ENCODE measurements at regions of chr10 and their contacts with region 1.

Region 1: DNA sequence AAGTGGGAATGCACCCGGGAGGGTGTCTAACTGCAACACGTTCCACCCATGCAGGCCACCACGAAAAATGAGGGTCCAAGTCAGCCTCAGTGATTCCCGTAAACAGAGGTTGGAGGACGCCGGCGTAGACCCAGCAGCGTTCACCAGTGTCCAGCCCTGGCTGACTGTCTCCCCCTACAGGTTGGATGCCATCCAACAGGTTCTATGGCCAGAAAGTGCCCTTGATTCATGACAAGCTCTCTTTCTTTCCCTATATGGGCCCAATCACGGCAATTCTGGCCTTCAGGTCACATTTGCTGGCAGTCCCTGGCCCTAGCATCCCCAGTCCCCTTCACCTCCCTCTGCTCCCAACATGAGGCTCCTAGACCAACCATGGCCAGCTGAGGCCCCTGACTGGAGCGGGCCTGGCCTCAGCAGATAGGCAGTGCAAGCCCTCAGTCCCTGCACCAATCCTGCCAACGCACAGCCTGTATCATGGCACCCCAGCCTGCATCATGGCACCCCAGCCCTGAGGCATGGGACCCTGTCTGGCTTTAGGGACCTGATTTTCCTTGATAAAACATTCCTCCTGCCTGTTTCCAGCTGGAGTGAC is 227.4 kb downstream of the GRID1 start:
- DNase-seq: no peak
- ATAC-seq: no peak
- H3K4me3 ChIP-seq: no peak overlapping the region
- H3K27ac ChIP-seq: no peak overlapping the region
- H3K4me1 ChIP-seq: no peaks in the 10 kb centered on the region
- H3K27me3 ChIP-seq: peaks cover 0 to 4% (median 0%) of the 10 kb centered on the region in 3 donors
- CTCF ChIP-seq: peak; percentile 39

Region 2: DNA sequence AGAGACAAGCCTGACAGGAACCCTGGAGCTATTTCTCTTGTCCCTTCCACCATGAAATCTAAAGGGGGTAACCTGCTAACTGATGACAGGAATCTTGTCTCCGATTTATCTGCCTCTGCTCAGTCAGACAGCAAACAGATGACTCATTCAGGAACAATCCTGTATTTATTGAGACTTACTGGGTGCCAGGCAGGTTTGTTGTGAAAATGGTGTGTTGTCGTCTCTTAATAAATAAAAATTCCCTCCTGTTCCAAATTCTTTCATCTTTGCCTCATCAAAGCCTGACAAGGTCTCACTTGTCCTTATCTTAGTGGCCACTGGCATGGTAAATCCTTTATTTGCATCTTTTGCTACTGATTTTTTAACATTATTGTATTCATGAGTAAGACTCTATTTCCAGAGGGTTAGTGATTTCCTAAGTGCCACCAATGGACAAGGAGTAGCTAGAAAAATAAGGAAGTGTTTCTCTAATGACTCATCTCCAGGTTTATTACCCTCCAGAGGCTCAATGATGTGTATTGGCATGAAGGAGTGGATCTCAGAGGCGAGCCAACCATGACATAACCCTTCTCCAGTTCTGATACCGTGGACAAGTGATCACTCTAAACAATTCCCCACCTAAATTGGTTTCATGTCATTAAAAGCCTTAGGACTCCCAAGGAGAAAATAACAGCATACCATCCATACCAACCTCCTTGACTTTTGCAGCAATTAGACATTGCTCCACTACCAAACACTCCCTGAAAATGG is 496.6 kb before region 1 on chr10:
- intact Hi-C with region 1: loop called in 1 of 2 experiments (anchors 10 kb)
- DNase-seq: no peak
- ATAC-seq: peak in 3 of 4 donors; percentile 51 to 70 (median 61)
- H3K4me3 ChIP-seq: no peak overlapping the region
- H3K27ac ChIP-seq: no peak overlapping the region
- H3K4me1 ChIP-seq: no peaks in the 10 kb centered on the region
- H3K27me3 ChIP-seq: no peaks in the 10 kb centered on the region
- CTCF ChIP-seq: no peak

Region 3: DNA sequence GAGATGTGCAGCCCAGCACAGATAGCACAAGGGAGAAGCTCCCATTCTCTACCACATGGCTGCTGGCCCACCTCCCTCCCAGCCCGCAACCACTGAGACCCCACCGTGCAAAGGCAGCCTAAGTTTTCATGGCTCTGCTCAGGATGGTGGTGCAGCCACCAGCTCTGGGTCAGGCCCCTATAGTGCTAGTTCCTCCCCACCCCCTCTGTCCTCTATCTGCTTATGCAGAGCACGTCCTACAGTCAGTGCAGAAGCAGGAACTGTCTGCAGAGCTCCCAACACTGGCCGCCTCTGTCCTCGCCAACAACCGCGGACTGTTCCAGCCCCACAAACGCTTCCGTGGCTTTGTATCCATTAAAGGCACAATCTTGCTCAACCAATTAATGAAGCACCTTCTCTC is 51.4 kb before region 1 on chr10:
- intact Hi-C with region 1: no loop called
- DNase-seq: no peak
- ATAC-seq: no peak
- H3K4me3 ChIP-seq: no peak overlapping the region
- H3K27ac ChIP-seq: no peak overlapping the region
- H3K4me1 ChIP-seq: no peaks in the 10 kb centered on the region
- H3K27me3 ChIP-seq: peaks cover 0 to 16% (median 0%) of the 10 kb centered on the region in 3 donors
- CTCF ChIP-seq: no peak

Measured in psoas muscle (tissue), 8 donors.